CD8-positive, alpha-beta T cell (primary cell): ENCODE measurements at regions of chr17 and their contacts with region 1.

Region 1: GRCh38 chr17:67751101-67752074 is 33.7 kb downstream of the NOL11 start:
- DNase-seq: no peak
- ATAC-seq: no peak
- H3K4me3 ChIP-seq: no peak overlapping the region
- H3K4me3 Mint-ChIP-seq: no peak overlapping the region
- H3K27ac ChIP-seq: no peak overlapping the region
- H3K27ac Mint-ChIP-seq: peak overlapping the region; percentile 32
- H3K4me1 ChIP-seq: no peaks in the 10 kb centered on the region
- H3K4me1 Mint-ChIP-seq: peaks cover 6% of the 10 kb centered on the region
- H3K27me3 ChIP-seq: no peaks in the 10 kb centered on the region
- H3K27me3 Mint-ChIP-seq: no peaks in the 10 kb centered on the region
- CTCF ChIP-seq: no peak

Region 2: DNA sequence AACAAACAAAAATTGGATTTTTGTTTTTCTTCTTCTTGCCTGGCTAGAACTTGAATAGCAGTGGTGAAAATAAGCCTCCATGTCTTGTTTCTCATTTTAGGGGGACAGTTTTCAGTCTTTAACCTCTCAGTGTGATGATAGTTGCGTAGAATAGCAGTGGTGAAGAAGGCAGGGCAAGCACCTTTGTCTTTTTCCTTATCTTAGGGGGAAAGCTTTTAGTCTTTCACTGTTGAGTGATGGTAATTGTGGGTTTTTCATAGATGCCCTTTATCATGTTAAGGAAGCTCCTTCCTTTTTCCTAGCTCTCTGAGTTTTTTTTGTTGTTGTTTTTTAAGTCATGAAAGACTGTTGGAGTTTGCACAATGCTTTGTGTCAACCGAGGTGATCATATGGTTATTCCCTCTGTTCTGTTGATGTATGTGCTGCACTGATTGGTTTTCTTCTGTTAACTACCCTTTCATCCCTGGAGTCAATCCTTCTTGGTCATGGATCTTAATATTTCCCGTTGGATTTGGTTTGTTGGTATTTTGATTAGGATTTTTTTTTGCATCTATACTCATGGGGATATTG is 17.9 kb before region 1 on chr17:
- CTCF ChIA-PET with region 1: no interaction called
- POLR2A ChIA-PET with region 1: interaction called, 3 read pairs
- intact Hi-C with region 1: loop called in 1 of 2 experiments (anchors 1 kb)
- DNase-seq: no peak
- ATAC-seq: no peak
- H3K4me3 ChIP-seq: no peak overlapping the region
- H3K4me3 Mint-ChIP-seq: no peak overlapping the region
- H3K27ac ChIP-seq: no peak overlapping the region
- H3K27ac Mint-ChIP-seq: peak overlapping the region; percentile 1
- H3K4me1 ChIP-seq: peaks cover 10% of the 10 kb centered on the region
- H3K4me1 Mint-ChIP-seq: peaks cover 30% of the 10 kb centered on the region
- H3K27me3 ChIP-seq: no peaks in the 10 kb centered on the region
- H3K27me3 Mint-ChIP-seq: no peaks in the 10 kb centered on the region
- CTCF ChIP-seq: no peak